Activated CD4-positive, alpha-beta T cell treated with anti-CD3 and anti-CD28 coated beads for 36 hours (primary cell): ENCODE measurements at regions of chr5 and their contacts with region 1.

Region 1: GRCh38 chr5:141968914-141969608 is at the start of gene RNF14:
- DNase-seq: peak; percentile 98
- ATAC-seq: peak; percentile 96
- H3K4me3 Mint-ChIP-seq: peak within 1 kb of the TSS; percentile 97
- H3K27ac Mint-ChIP-seq: peak within 1 kb of the TSS; percentile 96
- H3K4me1 Mint-ChIP-seq: peaks cover 30% of the 10 kb centered on the region
- H3K27me3 Mint-ChIP-seq: no peaks in the 10 kb centered on the region
- total RNA-seq, gene RNF14: 35.7 to 38.0 TPM

Region 2: GRCh38 chr5:141650851-141651727 is 318.0 kb before region 1 on chr5 and contains the start of gene FCHSD1:
- CTCF ChIA-PET with region 1: interaction called, 4 read pairs
- POLR2A ChIA-PET with region 1: no interaction called
- intact Hi-C with region 1: loop called in 1 of 2 experiments (anchors 1 kb)
- DNase-seq: peak; percentile 91
- ATAC-seq: peak; percentile 95
- H3K4me3 Mint-ChIP-seq: peak within 1 kb of the TSS; percentile 84
- H3K27ac Mint-ChIP-seq: peak within 1 kb of the TSS; percentile 94
- H3K4me1 Mint-ChIP-seq: peaks cover 20% of the 10 kb centered on the region
- H3K27me3 Mint-ChIP-seq: no peaks in the 10 kb centered on the region
- total RNA-seq, gene FCHSD1: 28.2 to 32.9 TPM

Region 3: DNA sequence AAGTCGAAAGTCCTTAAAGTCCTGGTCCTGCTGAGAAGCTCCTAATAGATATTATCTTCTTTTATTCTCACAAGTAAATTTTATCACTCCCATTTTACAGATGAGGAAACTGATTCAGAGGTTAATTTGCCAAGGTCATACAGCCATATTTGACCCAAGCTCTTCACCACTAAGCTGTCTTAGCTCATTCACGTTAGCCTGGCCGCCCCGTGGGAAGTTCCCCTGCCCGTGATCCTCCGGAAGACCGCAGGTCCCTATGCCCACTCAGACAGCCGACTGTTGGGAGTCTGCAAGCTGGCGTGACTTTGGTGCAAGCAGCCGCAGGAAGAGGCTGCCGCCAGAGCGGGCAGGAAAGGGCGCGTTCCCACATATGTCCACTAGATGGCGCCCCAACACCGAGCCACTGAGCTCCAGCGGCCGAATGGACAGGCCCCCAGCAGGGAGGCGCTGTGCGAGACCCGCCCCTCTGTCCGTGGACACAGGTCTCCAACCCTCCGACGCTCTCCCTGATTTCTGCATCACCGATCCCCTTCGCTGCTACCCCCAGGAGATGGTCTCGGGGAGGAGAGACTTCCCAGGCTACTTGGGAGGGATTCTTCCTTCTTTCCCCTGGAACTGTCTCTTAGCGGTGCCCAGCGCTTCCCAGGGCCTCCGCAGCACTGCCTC is 277.1 kb before region 1 on chr5:
- CTCF ChIA-PET with region 1: interaction called, 43 read pairs
- POLR2A ChIA-PET with region 1: interaction called, 3 read pairs
- intact Hi-C with region 1: loop called (anchors 2 kb)
- DNase-seq: peak; percentile 93
- ATAC-seq: peak; percentile 71
- H3K4me3 Mint-ChIP-seq: peak overlapping the region; percentile 64
- H3K27ac Mint-ChIP-seq: peak overlapping the region; percentile 55
- H3K4me1 Mint-ChIP-seq: peaks cover 25% of the 10 kb centered on the region
- H3K27me3 Mint-ChIP-seq: peaks cover 4% of the 10 kb centered on the region

Region 4: GRCh38 chr5:141923448-141924352 is 45.4 kb before region 1 on chr5 and contains the start of gene DELE1:
- CTCF ChIA-PET with region 1: interaction called, 8 read pairs
- POLR2A ChIA-PET with region 1: interaction called, 8 read pairs
- intact Hi-C with region 1: loop called (anchors 1 kb)
- DNase-seq: peak; percentile 96
- ATAC-seq: peak; percentile 94
- H3K4me3 Mint-ChIP-seq: peak within 1 kb of the TSS; percentile 90
- H3K27ac Mint-ChIP-seq: peak within 1 kb of the TSS; percentile 96
- H3K4me1 Mint-ChIP-seq: peaks cover 16% of the 10 kb centered on the region
- H3K27me3 Mint-ChIP-seq: no peaks in the 10 kb centered on the region
- total RNA-seq, gene DELE1: 48.7 to 56.1 TPM

Region 5: DNA sequence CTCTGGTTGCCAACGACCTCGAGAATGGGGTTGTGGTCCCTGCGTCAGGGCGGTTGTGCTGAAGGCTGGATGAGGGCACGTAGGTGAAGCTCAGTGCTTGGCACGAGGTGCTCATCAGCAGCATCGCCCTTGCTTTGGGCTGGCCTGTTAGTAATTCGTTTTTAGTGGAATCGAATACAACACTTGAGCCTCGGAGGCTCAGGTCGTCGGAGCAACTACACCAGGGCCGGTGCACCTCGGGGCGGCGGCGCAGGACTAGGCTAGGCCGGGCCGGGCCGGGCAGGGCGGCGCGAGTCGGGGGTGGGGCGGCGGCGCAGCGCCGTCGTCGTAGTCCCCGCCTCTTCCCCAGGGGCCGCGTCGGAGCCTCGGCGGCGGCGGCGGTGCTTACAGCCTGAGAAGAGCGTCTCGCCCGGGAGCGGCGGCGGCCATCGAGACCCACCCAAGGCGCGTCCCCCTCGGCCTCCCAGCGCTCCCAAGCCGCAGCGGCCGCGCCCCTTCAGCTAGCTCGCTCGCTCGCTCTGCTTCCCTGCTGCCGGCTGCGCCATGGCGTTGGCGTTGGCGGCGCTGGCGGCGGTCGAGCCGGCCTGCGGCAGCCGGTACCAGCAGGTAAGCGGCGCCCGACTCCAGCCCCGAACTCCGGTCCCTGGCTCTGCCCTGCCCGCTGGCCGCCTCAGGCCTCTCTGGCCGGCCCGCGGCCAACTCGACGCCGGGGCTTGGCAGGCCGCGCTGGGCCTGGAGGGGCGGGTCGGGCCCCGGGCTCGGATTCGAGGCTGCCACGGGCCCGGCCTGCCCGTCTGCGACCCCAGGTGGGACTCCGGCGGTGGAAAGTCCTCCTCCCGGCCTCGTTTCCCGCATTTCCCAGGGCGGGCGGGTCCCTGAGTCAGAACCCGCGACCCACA is 139.6 kb after region 1 on chr5 and contains the start of gene NDFIP1:
- CTCF ChIA-PET with region 1: interaction called, 7 read pairs
- POLR2A ChIA-PET with region 1: no interaction called
- intact Hi-C with region 1: loop called in 1 of 2 experiments (anchors 1 kb)
- DNase-seq: peak; percentile 93
- ATAC-seq: peak; percentile 86
- H3K4me3 Mint-ChIP-seq: peak within 1 kb of the TSS; percentile 95
- H3K27ac Mint-ChIP-seq: peak within 1 kb of the TSS; percentile 99
- H3K4me1 Mint-ChIP-seq: peaks cover 67% of the 10 kb centered on the region
- H3K27me3 Mint-ChIP-seq: no peaks in the 10 kb centered on the region
- total RNA-seq, gene NDFIP1: 54.9 to 86.7 TPM

Region 6: DNA sequence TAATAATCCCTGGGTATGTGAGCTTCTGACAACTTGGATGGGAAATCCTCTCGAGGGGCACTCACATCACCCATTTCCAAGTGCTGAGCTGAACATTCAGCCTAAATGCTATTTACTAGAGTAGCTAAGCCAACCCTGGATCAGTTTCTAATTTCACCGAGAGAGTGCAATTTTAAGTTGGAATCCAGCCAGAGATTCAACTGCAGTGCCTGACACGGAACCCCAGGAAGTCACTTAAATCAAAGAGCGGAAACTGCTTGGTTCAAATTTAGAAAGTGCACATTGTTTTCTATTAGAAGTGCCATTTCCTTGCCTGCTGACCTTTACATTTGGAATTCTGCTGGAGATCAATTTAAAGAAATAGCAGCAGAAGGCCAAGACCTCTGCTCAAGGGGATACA is 347.0 kb after region 1 on chr5:
- CTCF ChIA-PET with region 1: no interaction called
- POLR2A ChIA-PET with region 1: no interaction called
- intact Hi-C with region 1: no loop called
- DNase-seq: no peak
- ATAC-seq: peak; percentile 45
- H3K4me3 Mint-ChIP-seq: no peak overlapping the region
- H3K27ac Mint-ChIP-seq: peak overlapping the region; percentile 17
- H3K4me1 Mint-ChIP-seq: peaks cover 37% of the 10 kb centered on the region
- H3K27me3 Mint-ChIP-seq: peaks cover 2% of the 10 kb centered on the region

Region 7: DNA sequence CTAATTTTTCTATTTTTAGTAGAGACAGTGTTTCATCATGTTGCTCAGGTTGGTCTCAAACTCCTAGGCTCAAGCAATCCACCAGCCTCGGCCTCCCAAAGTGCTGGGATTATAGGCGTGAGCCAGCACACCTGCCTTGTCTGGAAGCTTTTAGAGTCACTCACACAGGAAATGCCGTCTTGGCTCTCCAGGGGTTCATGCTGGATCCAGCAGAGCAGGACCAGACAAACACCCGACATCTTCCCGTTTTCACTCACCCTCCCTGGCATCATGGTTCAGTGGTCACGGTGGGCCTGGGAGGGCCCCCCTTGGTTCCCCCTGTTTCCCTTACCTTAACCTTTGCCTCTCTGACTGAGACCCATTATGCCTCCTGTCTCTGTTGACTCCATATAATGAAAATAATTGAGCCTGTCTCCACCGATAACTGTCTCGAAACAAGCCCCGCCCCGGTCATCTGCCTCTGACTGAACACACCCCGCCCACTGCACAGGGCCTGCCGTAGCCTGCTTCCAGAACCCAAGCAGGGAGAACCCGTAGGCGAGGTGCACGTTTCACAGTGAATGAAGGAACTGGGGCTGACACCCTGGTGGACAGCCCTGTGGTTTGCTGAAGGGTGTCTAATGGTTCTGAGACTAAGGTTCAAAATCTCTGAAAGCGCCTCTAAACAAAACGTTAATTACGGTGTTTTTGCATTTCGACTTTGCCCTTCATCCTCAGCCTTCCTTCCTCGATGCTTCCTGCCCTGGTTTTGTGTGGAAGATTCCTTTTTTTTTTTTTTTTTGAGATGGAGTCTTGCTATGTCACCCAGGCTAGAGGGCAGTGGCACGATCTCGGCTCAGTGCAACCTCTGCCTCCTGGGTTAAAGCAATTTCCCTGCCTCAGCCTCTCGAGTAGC is 395.4 kb after region 1 on chr5:
- CTCF ChIA-PET with region 1: no interaction called
- POLR2A ChIA-PET with region 1: no interaction called
- intact Hi-C with region 1: no loop called
- DNase-seq: no peak
- ATAC-seq: no peak
- H3K4me3 Mint-ChIP-seq: no peak overlapping the region
- H3K27ac Mint-ChIP-seq: no peak overlapping the region
- H3K4me1 Mint-ChIP-seq: peaks cover 26% of the 10 kb centered on the region
- H3K27me3 Mint-ChIP-seq: no peaks in the 10 kb centered on the region

Region 8: GRCh38 chr5:143086908-143087637 is 1118.0 kb after region 1 on chr5:
- CTCF ChIA-PET with region 1: no interaction called
- POLR2A ChIA-PET with region 1: no interaction called
- intact Hi-C with region 1: no loop called
- DNase-seq: no peak
- ATAC-seq: no peak
- H3K4me3 Mint-ChIP-seq: no peak overlapping the region
- H3K27ac Mint-ChIP-seq: no peak overlapping the region
- H3K4me1 Mint-ChIP-seq: peaks cover 6% of the 10 kb centered on the region
- H3K27me3 Mint-ChIP-seq: no peaks in the 10 kb centered on the region